ENCODE measurements at regions of chr6 and their contacts with region 1.

Region 1: GRCh38 chr6:30700340-30700739 is 9.6 kb upstream of the NRM start:
- H3K4me3 ChIP-seq: no peak overlapping the region
- H3K27ac ChIP-seq: no peak overlapping the region
- H3K4me1 ChIP-seq: no peaks in the 10 kb centered on the region
- CTCF ChIP-seq: no peak

Region 2: DNA sequence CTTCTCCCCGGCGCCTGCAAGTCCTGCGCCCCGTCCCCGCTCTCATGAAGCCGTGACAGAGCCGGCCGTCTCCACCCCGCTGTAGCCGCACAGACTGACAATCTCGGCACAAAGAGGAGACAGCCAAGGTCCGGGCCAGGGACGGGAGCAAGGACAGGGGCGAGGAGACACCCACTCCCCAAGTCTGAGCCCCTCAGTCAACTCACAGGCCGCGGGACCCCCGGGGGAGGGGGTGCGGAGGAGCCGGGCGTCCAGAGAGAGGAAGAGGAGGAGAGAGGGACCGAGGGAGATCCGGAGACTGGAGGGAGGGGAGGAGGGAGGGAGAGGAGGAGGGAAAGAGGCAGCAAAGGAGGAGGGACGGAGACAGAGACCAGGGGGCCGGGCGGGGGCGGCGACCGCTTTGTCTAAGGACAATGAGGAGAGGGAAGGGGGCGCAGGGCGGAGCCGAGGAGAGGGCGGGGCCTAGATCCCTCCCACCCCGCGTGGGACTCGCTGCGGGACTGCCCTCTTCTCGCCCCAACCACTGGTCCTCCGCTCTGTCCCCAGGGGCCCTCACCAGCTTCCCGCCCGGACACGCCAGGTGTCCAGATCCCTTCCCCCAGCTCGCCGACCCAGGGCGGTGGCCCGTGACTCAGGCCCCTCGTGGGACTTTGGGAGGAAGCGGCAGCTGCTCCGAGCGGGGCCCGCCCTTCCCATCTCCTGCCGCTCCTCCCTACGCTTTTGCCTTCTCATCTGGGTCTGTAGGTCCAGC is 13.3 kb before region 1 on chr6:
- CTCF ChIA-PET with region 1: interaction called, 5 read pairs
- POLR2A ChIA-PET with region 1: interaction called, 30 read pairs
- H3K4me3 ChIP-seq: peak overlapping the region; percentile 52
- H3K27ac ChIP-seq: peak overlapping the region; percentile 94
- H3K4me1 ChIP-seq: peaks cover 31% of the 10 kb centered on the region
- CTCF ChIP-seq: peak; percentile 4; the same call in 1 of the 2 replicates

Region 3: DNA sequence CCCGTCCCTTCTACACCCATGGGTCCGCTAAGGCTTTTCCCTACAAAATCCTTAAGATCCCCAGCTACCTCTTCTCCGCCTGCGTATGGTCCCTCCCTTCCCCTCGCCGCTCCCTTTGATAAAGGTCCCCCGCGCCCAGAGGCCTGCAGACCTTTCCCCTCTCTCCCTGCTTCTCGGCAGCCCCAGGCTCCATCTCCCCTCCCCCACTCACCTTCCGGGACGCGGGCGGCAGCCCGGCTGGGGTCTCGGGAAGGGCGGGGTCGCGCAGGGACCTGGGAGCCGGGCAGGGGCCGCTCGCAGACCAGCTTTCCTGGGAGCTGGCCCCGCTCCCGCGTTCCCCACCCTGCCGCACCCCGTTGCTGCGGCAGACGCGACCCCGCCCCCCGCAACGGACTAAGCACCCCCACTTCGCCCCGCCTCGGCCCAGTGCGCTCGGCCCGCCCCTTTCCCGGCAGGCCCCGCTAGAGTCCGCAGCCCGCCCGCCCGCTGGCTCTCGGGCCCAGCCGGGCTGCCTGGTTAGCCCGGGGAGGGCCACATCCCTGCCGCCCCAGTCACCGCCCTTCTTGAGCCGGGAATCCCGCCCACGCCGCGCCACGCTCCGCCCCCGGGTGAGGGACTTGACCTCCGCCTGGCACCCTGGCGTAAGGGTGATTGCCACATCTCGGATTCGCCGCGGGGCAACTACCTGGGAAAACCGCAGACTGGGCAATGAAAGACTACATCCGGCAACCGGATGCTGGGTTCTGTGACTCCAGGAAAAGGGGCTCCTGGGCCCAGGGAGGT is 42.2 kb after region 1 on chr6 and contains the start of gene FLOT1:
- CTCF ChIA-PET with region 1: no interaction called
- POLR2A ChIA-PET with region 1: no interaction called
- H3K4me3 ChIP-seq: peak within 1 kb of the TSS; percentile 67
- H3K27ac ChIP-seq: peak within 1 kb of the TSS; percentile 94
- H3K4me1 ChIP-seq: no peaks in the 10 kb centered on the region
- CTCF ChIP-seq: no peak

Region 4: DNA sequence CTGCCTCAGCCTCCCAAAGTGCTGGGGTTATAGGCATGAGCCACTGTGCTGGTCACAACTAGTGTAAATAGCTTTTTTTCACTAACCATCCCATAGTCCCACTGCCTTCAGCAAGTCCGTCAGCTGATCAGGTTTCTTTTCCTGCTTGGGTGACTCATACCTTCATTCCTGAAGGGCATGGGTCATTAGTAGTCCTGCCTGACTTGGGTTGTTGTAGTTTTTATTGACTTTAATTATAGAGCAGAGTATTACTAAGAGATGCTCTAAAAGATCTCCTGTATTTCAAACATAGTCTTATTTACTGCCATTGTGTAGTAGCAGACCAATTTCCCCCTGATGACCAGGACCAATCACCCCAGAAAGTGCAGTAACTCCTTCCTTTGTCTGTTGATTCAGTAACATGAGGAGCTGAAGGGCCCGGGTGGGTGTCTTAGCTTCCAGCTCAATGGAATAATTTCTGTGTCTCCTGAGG is 545.7 kb after region 1 on chr6:
- CTCF ChIA-PET with region 1: no interaction called
- POLR2A ChIA-PET with region 1: no interaction called
- H3K4me3 ChIP-seq: no peak overlapping the region
- H3K27ac ChIP-seq: no peak overlapping the region
- H3K4me1 ChIP-seq: 0 out of 2 replicates have a peak, but pooled peaks cover 3% of the 10 kb centered on the region
- CTCF ChIP-seq: no peak